ENCODE measurements at regions of chr6 and their contacts with region 1.

Region 1: GRCh38 chr6:156686995-156687788 is 90.0 kb upstream of the ARID1B start:
- DNase-seq: peak; percentile 85
- H3K4me3 ChIP-seq: peak overlapping the region; percentile 82 to 91 (median 86)
- H3K27ac ChIP-seq: peak overlapping the region; percentile 98
- H3K4me1 ChIP-seq: peaks cover 11% of the 10 kb centered on the region
- H3K27me3 ChIP-seq: peaks cover 5 to 18% of the 10 kb centered on the region in 2 experiments
- CTCF ChIP-seq: no peak
- POLR2A ChIP-seq: peak; percentile 68

Region 2: DNA sequence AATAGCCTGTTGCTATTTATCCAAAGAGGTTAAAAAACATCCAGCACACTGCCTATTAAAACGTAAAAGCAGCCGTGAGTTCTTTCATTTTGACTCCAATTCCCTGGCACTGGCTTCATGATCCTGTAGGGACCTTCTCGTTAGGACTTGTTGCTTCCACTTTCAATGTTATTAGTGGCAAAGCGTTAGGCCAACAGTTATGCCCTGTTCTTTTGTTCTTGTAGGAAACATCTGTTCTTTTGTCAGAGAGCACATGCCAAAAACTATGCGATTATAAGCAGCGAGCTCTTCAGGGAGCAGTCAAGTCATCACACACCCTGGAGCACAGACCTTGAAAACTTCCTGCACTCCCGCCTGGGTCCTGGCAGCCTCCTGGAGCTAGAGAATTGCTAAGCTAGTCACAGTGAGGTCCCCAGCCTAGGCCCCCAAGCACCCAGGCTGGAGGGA is 519.5 kb before region 1 on chr6:
- CTCF ChIA-PET with region 1: no interaction called
- POLR2A ChIA-PET with region 1: no interaction called
- dilution Hi-C with region 1: no loop called
- intact Hi-C with region 1: loop called (anchors 10 kb)
- DNase-seq: peak; percentile 98
- H3K4me3 ChIP-seq: peak overlapping the region in 1 of 3 experiments; percentile 18
- H3K27ac ChIP-seq: peak overlapping the region; percentile 68
- H3K4me1 ChIP-seq: peaks cover 17% of the 10 kb centered on the region
- H3K27me3 ChIP-seq: no peaks in the 10 kb centered on the region
- CTCF ChIP-seq: no peak
- POLR2A ChIP-seq: peak; percentile 24

Region 3: DNA sequence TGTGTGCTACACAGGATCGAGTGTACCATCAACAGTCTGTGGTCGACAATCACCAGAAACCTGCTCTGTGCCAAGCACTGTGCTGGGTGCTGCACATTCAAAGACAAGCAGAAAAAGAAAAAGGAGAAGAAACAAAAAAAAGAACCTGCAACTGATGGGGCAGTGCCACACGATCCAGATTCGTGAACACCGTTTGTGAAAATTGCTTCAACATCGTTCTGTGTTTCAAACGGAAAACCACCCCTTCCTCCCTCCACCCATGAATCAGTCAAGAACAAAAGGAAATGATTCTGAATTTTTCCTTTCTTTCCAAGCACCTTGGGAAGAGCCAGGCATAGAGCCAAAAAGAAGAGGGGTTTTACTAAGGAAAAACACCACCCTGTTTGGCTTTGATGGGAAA is 39.2 kb before region 1 on chr6:
- CTCF ChIA-PET with region 1: no interaction called
- POLR2A ChIA-PET with region 1: no interaction called
- dilution Hi-C with region 1: no loop called
- intact Hi-C with region 1: loop called (anchors 2 kb)
- DNase-seq: peak; percentile 59
- H3K4me3 ChIP-seq: peak overlapping the region in 1 of 3 experiments; percentile 51
- H3K27ac ChIP-seq: no peak overlapping the region
- H3K4me1 ChIP-seq: peaks cover 12% of the 10 kb centered on the region
- H3K27me3 ChIP-seq: peaks cover 5 to 13% of the 10 kb centered on the region in 2 experiments
- CTCF ChIP-seq: no peak
- POLR2A ChIP-seq: no peak

Region 4: DNA sequence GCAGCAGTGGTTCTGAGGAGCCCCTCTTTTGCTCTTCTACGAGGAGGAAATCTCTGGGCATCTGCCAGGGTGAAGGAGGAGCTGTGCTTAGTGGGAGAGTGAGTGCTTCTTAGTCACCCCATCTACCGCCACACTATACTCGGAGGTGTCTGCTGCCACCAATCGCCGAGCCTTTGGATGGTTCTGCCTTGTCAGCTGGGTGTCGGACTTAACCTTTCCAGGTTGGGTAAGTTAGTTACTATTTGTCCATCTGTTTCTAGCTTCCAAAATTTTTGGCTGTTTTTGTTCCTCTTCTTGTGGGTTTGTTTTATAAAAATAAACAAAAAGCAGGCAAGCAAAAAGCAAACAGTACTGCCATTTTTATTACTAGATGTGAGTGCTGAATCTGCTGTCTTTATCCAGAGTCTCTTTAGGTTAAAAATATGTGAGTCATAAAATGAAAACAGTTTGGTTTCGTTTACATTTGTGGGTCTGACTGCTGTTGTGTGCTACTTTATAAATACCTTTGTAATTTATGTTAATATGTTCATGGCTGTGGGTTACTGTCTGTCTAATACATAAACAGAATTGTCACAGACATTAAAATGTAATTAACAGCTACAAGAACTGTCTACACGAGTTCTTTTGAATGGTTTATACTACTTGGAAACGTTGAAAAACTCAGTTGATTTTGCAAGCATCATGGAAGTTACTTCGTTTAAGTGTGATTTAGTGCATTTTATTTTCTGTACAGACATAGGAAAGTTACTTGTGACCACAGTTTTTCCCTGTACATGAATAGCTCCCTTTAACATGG is 179.2 kb after region 1 on chr6:
- CTCF ChIA-PET with region 1: no interaction called
- POLR2A ChIA-PET with region 1: no interaction called
- dilution Hi-C with region 1: no loop called
- intact Hi-C with region 1: loop called (anchors 10 kb)
- DNase-seq: peak; percentile 43
- H3K4me3 ChIP-seq: no peak overlapping the region
- H3K27ac ChIP-seq: no peak overlapping the region
- H3K4me1 ChIP-seq: peaks cover 23% of the 10 kb centered on the region
- H3K27me3 ChIP-seq: no peaks in the 10 kb centered on the region
- CTCF ChIP-seq: no peak
- POLR2A ChIP-seq: no peak

Region 5: DNA sequence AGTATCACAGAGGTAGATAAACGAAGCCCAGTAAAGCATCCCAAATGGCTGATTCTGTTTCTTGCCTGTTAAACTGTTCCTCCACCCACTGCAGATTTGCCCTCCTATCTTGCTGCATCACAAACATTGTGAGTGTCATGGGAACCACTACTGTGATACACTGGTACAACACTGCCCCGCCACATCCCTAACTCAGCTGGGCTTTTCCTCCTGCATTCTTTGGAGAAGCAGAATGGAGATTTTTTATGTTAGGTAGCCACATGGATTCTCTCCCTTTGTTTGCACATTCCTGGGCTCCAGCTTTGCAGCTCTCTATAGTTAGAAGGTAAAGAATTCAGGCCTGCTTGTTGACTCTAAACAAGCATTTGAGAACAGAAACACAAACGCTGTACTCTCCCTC is 402.1 kb after region 1 on chr6:
- CTCF ChIA-PET with region 1: no interaction called
- POLR2A ChIA-PET with region 1: no interaction called
- dilution Hi-C with region 1: no loop called
- intact Hi-C with region 1: no loop called
- DNase-seq: no peak
- H3K4me3 ChIP-seq: no peak overlapping the region
- H3K27ac ChIP-seq: peak overlapping the region; percentile 80
- H3K4me1 ChIP-seq: peaks cover 55% of the 10 kb centered on the region
- H3K27me3 ChIP-seq: no peaks in the 10 kb centered on the region
- CTCF ChIP-seq: no peak
- POLR2A ChIP-seq: no peak

Region 6: DNA sequence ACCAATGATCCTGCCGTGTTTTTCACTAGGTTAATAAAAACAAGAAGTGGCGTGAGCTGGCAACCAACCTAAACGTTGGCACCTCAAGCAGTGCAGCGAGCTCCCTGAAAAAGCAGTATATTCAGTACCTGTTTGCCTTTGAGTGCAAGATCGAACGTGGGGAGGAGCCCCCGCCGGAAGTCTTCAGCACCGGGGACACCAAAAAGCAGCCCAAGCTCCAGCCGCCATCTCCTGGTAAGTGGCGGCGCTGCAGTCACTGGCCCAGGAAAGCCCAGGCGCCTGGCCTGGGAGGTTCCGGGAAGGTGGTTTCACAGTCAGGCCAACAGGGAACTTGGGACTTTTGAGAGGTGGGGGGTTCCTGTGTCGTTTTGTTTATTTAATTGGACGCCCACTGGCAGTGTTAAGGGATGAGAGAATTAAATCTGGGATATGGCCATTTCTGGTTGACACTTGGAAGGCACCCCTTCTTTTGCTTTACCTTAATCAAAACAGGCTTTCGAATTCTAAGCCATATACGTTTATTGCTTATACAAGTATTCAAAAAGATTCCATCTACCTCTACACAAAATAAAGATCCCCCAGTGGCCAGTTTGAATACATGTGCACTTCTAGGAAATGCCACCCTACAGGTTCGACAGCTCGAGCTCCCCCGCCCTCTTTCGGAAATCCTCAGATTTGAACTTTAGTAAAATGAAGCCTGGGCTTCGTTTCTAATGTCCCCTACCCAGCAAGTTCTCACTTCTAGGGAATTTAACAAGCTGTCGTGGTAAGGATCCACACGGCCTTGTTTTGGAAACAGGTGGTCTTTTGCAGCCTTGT is 497.2 kb after region 1 on chr6:
- CTCF ChIA-PET with region 1: no interaction called
- POLR2A ChIA-PET with region 1: no interaction called
- dilution Hi-C with region 1: no loop called
- intact Hi-C with region 1: loop called (anchors 10 kb)
- DNase-seq: peak; percentile 44
- H3K4me3 ChIP-seq: no peak overlapping the region
- H3K27ac ChIP-seq: no peak overlapping the region
- H3K4me1 ChIP-seq: no peaks in the 10 kb centered on the region
- H3K27me3 ChIP-seq: no peaks in the 10 kb centered on the region
- CTCF ChIP-seq: peak; percentile 82 to 89
- POLR2A ChIP-seq: no peak